CD8-positive, alpha-beta T cell (primary cell): ENCODE measurements at regions of chr20 and their contacts with region 1.

Region 1: GRCh38 chr20:22684072-22684762 is 99.8 kb upstream of the FOXA2 start:
- DNase-seq: peak in 2 of 9 experiments; percentile 15 to 46
- ATAC-seq: no peak
- H3K4me3 ChIP-seq: no peak overlapping the region
- H3K4me3 Mint-ChIP-seq: no peak overlapping the region
- H3K27ac ChIP-seq: no peak overlapping the region
- H3K27ac Mint-ChIP-seq: no peak overlapping the region
- H3K4me1 ChIP-seq: no peaks in the 10 kb centered on the region
- H3K4me1 Mint-ChIP-seq: no peaks in the 10 kb centered on the region
- H3K27me3 ChIP-seq: no peaks in the 10 kb centered on the region
- H3K27me3 Mint-ChIP-seq: peaks cover 3% of the 10 kb centered on the region
- CTCF ChIP-seq: peak; percentile 36

Region 2: GRCh38 chr20:22339091-22339881 is 344.9 kb before region 1 on chr20:
- CTCF ChIA-PET with region 1: interaction called, 4 read pairs
- POLR2A ChIA-PET with region 1: no interaction called
- intact Hi-C with region 1: loop called in 1 of 2 experiments (anchors 2 kb)
- DNase-seq: peak in 3 of 9 experiments; percentile 9 to 47 (median 11)
- ATAC-seq: no peak
- H3K4me3 ChIP-seq: no peak overlapping the region
- H3K4me3 Mint-ChIP-seq: no peak overlapping the region
- H3K27ac ChIP-seq: no peak overlapping the region
- H3K27ac Mint-ChIP-seq: no peak overlapping the region
- H3K4me1 ChIP-seq: no peaks in the 10 kb centered on the region
- H3K4me1 Mint-ChIP-seq: peaks cover 1% of the 10 kb centered on the region
- H3K27me3 ChIP-seq: no peaks in the 10 kb centered on the region
- H3K27me3 Mint-ChIP-seq: peaks cover 4% of the 10 kb centered on the region
- CTCF ChIP-seq: peak; percentile 44

Region 3: DNA sequence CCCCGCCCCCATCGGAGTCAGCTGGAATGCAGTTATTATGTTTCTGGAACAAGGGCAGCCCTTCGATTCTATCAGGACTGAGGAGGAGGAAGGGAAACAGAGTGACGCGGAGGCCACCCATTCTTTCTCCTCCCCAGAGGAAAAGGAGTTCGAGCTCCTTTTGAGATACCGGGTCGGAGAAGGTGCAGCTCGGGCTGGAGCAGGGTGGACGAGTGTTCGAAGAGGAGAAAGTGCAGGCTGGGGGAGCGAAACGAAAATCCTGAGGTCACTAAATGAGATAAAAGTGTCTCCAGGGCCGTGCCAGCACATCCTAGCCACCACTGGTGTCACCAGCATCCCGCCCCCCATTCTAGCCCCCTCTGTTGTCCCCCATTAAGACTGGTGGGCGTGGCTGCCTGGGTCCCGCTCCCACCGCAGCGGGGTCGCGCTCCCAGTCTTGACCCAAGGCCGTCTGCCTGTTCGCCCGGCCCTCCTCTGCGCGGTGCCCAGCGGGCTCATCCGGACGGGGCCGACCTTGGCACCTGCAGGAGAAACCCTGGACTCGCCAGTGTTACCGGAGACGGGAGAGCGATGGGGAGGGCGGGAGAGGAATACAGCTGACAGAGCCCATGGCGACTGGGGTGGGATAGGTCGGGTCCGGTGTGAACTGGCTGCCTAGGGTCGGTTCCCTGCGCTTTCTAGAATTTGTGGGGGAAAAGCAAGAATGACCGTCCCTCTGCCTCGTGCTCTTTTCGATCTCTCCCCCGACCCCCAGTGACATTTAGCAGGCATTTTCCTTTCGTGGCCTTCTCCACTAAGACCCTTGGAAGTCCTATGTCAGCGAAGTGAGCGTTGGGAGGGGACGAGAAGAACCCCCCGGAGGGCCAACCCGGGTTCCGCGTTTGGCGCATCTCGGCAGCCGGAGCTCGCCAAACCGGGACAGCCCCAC is 116.0 kb before region 1 on chr20:
- CTCF ChIA-PET with region 1: no interaction called
- POLR2A ChIA-PET with region 1: no interaction called
- intact Hi-C with region 1: no loop called
- DNase-seq: no peak
- ATAC-seq: no peak
- H3K4me3 ChIP-seq: no peak overlapping the region
- H3K4me3 Mint-ChIP-seq: no peak overlapping the region
- H3K27ac ChIP-seq: no peak overlapping the region
- H3K27ac Mint-ChIP-seq: no peak overlapping the region
- H3K4me1 ChIP-seq: no peaks in the 10 kb centered on the region
- H3K4me1 Mint-ChIP-seq: no peaks in the 10 kb centered on the region
- H3K27me3 ChIP-seq: peaks cover 0 to 13% of the 10 kb centered on the region in 2 experiments
- H3K27me3 Mint-ChIP-seq: peaks cover 70% of the 10 kb centered on the region
- CTCF ChIP-seq: no peak

Region 4: DNA sequence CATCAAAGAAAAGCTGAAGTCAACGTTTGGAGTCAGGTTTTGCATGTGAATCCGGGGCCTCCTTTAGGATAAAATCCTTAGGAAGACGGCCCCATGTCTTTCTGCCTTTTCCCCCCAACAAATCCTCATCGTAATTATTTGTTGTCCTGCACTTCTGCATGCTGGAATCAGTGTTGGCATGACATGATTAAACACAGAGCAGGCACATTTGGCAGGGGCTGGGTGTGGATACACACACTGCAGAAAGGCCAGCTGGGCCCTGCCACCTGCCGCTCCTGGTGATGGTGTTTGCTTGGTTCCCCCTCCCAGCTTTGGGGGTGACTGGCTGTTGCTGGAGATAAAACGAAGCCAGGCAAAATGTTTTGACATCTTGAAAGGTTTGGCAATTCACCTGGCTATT is 53.5 kb before region 1 on chr20:
- CTCF ChIA-PET with region 1: no interaction called
- POLR2A ChIA-PET with region 1: no interaction called
- intact Hi-C with region 1: no loop called
- DNase-seq: no peak
- ATAC-seq: no peak
- H3K4me3 ChIP-seq: no peak overlapping the region
- H3K4me3 Mint-ChIP-seq: no peak overlapping the region
- H3K27ac ChIP-seq: no peak overlapping the region
- H3K27ac Mint-ChIP-seq: no peak overlapping the region
- H3K4me1 ChIP-seq: no peaks in the 10 kb centered on the region
- H3K4me1 Mint-ChIP-seq: no peaks in the 10 kb centered on the region
- H3K27me3 ChIP-seq: no peaks in the 10 kb centered on the region
- H3K27me3 Mint-ChIP-seq: no peaks in the 10 kb centered on the region
- CTCF ChIP-seq: no peak

Region 5: GRCh38 chr20:22951966-22952567 is 267.9 kb after region 1 on chr20:
- CTCF ChIA-PET with region 1: no interaction called
- POLR2A ChIA-PET with region 1: no interaction called
- intact Hi-C with region 1: no loop called
- DNase-seq: no peak
- ATAC-seq: no peak
- H3K4me3 ChIP-seq: no peak overlapping the region
- H3K4me3 Mint-ChIP-seq: no peak overlapping the region
- H3K27ac ChIP-seq: no peak overlapping the region
- H3K27ac Mint-ChIP-seq: no peak overlapping the region
- H3K4me1 ChIP-seq: no peaks in the 10 kb centered on the region
- H3K4me1 Mint-ChIP-seq: no peaks in the 10 kb centered on the region
- H3K27me3 ChIP-seq: no peaks in the 10 kb centered on the region
- H3K27me3 Mint-ChIP-seq: no peaks in the 10 kb centered on the region
- CTCF ChIP-seq: no peak